ENCODE measurements at regions of chr17 and their contacts with region 1.

Region 1: DNA sequence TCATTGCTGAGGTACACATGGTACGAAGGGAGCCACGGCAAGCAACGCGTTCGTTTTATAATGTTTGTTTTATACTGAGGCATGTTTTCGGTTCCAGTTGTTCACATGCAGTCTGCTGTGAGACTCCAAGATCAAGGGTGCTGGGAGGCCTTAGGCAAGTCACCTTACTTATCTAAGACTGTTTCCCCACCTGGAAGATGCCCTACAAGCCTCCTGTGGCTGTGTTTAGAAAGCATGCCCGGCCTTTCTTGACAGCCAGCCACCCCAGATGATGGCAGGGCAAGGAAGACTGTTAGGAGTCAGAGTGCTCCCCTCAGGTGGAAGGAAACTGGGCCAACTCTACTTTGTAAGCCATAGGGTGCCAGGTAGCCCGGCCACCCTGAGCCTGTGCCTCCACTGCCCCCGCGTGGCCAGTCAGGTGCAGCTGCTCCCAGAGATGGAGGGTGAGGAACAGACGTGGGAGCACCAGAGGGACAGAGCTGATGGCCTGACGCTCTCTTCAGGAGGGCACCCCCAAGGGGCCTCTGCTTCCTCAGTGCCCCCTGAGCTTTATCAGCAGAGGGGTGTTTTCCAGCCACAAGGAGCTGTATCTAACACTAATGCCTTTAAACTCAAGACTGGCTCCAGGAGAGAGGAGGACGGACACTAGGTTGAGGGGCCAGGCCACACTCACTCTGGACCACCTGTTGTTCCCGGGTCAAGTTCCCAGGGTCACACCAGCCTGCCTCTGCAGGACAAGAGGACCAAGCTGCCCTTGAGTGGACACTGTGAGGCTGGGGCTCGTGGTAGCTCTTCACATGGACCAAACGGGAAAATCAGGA is 5.4 kb downstream of the NAT9 start:
- DNase-seq: peak; percentile 78 to 94 (median 89)
- ATAC-seq: peak; percentile 76 to 85 (median 84)
- H3K4me3 ChIP-seq: no peak overlapping the region
- H3K27ac ChIP-seq: peak overlapping the region; percentile 17 to 87 (median 56)
- H3K4me1 ChIP-seq: peaks cover 37 to 51% (median 42%) of the 10 kb centered on the region in 3 donors
- H3K27me3 ChIP-seq: no peaks in the 10 kb centered on the region
- CTCF ChIP-seq: peak; percentile 79 to 87 (median 82)

Region 2: GRCh38 chr17:74552037-74552436 is 218.7 kb before region 1 on chr17:
- intact Hi-C with region 1: no loop called
- DNase-seq: no peak
- ATAC-seq: no peak
- H3K4me3 ChIP-seq: no peak overlapping the region
- H3K27ac ChIP-seq: no peak overlapping the region
- H3K4me1 ChIP-seq: no peaks in the 10 kb centered on the region
- H3K27me3 ChIP-seq: no peaks in the 10 kb centered on the region
- CTCF ChIP-seq: no peak

Region 3: DNA sequence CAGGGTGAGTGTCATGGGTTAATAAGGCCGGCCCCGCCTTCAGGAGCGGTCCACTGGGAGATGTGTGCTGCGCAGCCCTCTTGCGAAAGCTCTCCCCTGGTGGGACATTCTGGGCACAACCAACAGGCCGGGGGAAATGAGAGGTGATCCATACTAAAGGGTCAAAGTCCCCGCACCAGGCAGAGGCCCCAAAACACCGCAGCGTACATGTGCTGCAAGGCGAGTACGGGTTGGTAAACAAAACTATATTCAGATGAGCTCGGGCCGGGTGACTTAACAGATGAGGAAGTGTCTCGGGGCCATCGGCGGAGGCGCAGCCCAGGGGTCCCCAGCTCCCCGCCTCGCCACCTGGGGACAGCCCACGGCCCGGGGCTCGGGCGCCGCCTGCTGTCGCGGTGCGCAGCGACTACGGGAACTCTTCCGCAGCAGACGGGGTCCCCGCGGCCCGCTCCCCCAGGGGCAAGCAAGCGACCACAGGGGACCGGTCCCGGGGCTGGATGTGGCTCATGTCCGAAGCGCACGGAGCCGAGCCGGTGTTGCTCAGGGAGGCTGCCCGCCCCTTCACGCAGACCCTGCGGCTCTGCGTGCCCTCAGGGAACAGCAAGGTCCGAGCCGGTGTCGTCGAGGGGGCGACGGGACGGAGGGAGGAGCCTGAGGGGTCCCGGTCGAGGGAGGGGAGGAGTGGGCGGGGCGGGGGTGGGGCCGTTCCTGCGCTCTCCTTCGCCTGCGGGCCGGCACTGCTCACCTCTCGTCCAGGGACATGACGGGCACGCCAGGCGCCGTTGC is 34.0 kb before region 1 on chr17 and contains the start of gene RAB37:
- intact Hi-C with region 1: loop called in 1 of 3 experiments (anchors 5 kb)
- DNase-seq: peak in 4 of 6 donors; percentile 57 to 74 (median 62)
- ATAC-seq: peak; percentile 73 to 79 (median 75)
- H3K4me3 ChIP-seq: peak within 1 kb of the TSS in 2 of 4 donors; percentile 29 to 41
- H3K27ac ChIP-seq: peak within 1 kb of the TSS in 3 of 4 donors; percentile 49 to 62 (median 53)
- H3K4me1 ChIP-seq: peaks cover 0 to 10% (median 0%) of the 10 kb centered on the region in 3 donors
- H3K27me3 ChIP-seq: peaks cover 0 to 4% (median 0%) of the 10 kb centered on the region in 4 donors
- CTCF ChIP-seq: no peak
- total RNA-seq, gene RAB37: 0.79 to 1.8 (median 1.2) TPM

Region 4: GRCh38 chr17:74748529-74749365 is 22.0 kb before region 1 on chr17 and contains the start of gene NHERF1:
- intact Hi-C with region 1: loop called in 1 of 3 experiments (anchors 2 kb)
- DNase-seq: peak; percentile 93 to 99 (median 96)
- ATAC-seq: peak; percentile 77 to 84 (median 82)
- H3K4me3 ChIP-seq: peak within 1 kb of the TSS; percentile 55 to 98 (median 88)
- H3K27ac ChIP-seq: peak within 1 kb of the TSS; percentile 88 to 97 (median 95)
- H3K4me1 ChIP-seq: peaks cover 18 to 28% (median 24%) of the 10 kb centered on the region in 3 donors
- H3K27me3 ChIP-seq: no peaks in the 10 kb centered on the region
- CTCF ChIP-seq: peak in 1 of 4 donors; percentile 14
- total RNA-seq, gene NHERF1: 40.1 to 78.5 (median 55.9) TPM

Region 5: DNA sequence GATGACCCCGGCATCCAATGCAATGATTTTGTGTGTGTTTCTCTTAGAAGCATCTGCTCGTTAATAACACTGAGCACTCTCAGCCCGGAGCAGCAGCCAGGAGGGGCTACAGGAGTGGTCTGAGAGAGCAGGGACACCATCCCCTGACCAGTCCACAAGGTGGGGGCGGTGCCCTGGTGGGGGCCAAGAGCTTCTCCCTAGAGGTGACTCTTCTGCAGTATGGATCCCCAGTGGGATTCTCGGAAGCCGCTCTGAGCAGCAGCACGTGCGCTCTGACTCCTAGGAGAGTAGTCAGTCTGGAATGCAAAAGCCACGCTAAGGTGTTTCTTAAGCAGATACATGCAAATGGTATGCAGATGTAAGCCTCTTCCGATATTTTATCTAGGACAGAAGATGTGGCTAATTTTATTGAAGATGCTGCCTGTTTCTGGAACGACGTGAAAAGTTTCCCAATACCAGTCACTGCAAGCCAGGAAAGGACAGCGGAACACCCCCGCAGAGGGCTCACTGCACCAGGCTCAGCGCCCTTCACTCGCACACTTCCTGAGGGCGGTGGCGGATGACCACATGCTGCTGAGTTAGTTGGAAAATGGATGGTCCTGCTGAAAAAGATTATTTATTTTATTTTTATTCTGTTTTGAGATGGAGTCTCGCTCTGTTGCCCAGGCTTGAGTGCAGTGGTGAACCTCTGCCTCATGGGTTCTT is 112.5 kb after region 1 on chr17:
- intact Hi-C with region 1: no loop called
- DNase-seq: peak in 1 of 6 donors; percentile 43
- ATAC-seq: no peak
- H3K4me3 ChIP-seq: no peak overlapping the region
- H3K27ac ChIP-seq: no peak overlapping the region
- H3K4me1 ChIP-seq: no peaks in the 10 kb centered on the region
- H3K27me3 ChIP-seq: no peaks in the 10 kb centered on the region
- CTCF ChIP-seq: no peak

Region 6: DNA sequence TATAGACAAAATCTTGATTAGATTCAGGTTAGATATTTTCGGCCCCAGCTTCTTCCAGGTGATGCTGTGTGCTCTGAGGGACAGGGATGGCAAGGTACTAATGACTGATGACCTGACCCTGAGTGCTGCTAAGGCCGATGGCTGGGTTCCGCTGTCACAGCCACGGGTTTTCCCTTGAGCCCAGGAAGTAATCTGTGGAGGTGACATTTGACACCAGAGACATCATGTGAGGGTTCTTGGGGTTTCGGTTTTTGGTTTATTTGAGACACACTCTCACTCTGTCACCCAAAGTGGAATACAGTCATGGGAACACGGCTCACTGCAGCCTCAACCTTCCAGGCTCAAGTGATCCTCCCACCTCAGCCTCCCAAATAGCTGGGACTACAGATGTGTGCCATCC is 174.8 kb after region 1 on chr17:
- intact Hi-C with region 1: no loop called
- DNase-seq: no peak
- ATAC-seq: no peak
- H3K4me3 ChIP-seq: no peak overlapping the region
- H3K27ac ChIP-seq: no peak overlapping the region
- H3K4me1 ChIP-seq: no peaks in the 10 kb centered on the region
- H3K27me3 ChIP-seq: no peaks in the 10 kb centered on the region
- CTCF ChIP-seq: no peak

Measured in pancreas (tissue), 10 donors.